ENCODE measurements at regions of chr9 and their contacts with region 1.

Region 1: DNA sequence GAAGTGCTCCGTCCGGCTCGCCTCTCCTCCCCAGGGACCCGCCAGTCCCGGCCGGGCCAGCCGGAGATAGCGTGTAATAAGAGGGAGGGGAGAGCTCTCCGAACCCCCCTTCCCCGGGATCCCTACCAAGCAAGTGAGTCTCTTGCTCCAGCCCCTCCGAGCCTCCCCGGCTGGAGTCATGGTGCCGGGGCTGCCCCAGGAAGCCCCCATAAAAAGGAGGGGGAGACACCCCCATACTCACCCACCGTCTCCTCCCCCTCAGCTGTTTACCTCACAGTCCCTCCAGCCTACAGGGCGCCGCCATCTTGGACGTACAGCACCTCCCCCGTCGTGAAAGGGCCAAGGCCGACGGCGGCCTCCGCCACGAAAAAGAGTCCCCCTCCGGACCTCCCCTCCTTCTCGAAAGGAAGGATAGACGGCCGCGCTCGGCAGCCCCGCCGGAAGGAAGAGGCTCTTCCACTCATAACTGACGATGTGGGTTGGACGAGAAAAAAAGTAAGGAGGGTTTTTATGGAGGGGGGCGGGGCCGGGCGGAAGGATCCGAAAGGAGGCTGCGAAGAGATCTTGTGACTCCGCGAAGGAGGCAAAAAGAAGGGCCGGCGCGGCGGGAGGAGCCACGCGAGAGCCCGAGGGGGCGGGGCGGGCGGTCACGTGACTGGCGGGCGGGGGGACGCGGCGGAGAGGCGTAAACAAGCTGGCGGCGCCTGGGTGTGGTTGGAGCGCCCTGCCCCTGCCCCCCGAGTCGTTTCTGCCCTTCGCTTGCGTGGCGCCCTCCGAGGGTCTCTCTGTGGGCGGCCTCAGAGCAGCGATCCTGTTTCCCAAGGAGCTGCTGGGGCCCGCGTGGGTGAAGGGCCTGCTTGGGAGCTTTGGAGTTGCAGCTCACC is at the start of gene TSC1:
- DNase-seq: peak; percentile 96 to 99 (median 98)
- ATAC-seq: peak; percentile 94
- H3K4me3 ChIP-seq: peak within 1 kb of the TSS; percentile 93
- H3K4me3 Mint-ChIP-seq: peak within 1 kb of the TSS; percentile 90 to 99 (median 98)
- H3K27ac ChIP-seq: peak within 1 kb of the TSS; percentile 94
- H3K27ac Mint-ChIP-seq: peak within 1 kb of the TSS; percentile 99 to 100 (median 100)
- H3K4me1 ChIP-seq: peaks cover 8 to 14% of the 10 kb centered on the region in 2 donors
- H3K4me1 Mint-ChIP-seq: peaks cover 15 to 45% (median 27%) of the 10 kb centered on the region in 7 donors
- H3K27me3 ChIP-seq: no peaks in the 10 kb centered on the region
- H3K27me3 Mint-ChIP-seq: peaks cover 0 to 3% (median 0%) of the 10 kb centered on the region in 5 donors
- total RNA-seq, gene TSC1: 38.1 to 98.3 (median 59.6) TPM

Region 2: GRCh38 chr9:132768932-132769905 is 175.3 kb before region 1 on chr9:
- CTCF ChIA-PET with region 1: no interaction called
- POLR2A ChIA-PET with region 1: interaction called, 4 read pairs
- intact Hi-C with region 1: loop called in 1 of 2 experiments (anchors 1 kb)
- DNase-seq: peak in 8 of 9 donors; percentile 42 to 69 (median 60)
- ATAC-seq: peak; percentile 86
- H3K4me3 ChIP-seq: peak overlapping the region; percentile 86
- H3K4me3 Mint-ChIP-seq: peak overlapping the region; percentile 95 to 100 (median 98)
- H3K27ac ChIP-seq: peak overlapping the region; percentile 77
- H3K27ac Mint-ChIP-seq: peak overlapping the region; percentile 90 to 99 (median 97)
- H3K4me1 ChIP-seq: peaks cover 3 to 9% of the 10 kb centered on the region in 2 donors
- H3K4me1 Mint-ChIP-seq: peaks cover 8 to 37% (median 27%) of the 10 kb centered on the region in 7 donors
- H3K27me3 ChIP-seq: no peaks in the 10 kb centered on the region
- H3K27me3 Mint-ChIP-seq: peaks cover 0 to 20% (median 0%) of the 10 kb centered on the region in 5 donors

Region 3: DNA sequence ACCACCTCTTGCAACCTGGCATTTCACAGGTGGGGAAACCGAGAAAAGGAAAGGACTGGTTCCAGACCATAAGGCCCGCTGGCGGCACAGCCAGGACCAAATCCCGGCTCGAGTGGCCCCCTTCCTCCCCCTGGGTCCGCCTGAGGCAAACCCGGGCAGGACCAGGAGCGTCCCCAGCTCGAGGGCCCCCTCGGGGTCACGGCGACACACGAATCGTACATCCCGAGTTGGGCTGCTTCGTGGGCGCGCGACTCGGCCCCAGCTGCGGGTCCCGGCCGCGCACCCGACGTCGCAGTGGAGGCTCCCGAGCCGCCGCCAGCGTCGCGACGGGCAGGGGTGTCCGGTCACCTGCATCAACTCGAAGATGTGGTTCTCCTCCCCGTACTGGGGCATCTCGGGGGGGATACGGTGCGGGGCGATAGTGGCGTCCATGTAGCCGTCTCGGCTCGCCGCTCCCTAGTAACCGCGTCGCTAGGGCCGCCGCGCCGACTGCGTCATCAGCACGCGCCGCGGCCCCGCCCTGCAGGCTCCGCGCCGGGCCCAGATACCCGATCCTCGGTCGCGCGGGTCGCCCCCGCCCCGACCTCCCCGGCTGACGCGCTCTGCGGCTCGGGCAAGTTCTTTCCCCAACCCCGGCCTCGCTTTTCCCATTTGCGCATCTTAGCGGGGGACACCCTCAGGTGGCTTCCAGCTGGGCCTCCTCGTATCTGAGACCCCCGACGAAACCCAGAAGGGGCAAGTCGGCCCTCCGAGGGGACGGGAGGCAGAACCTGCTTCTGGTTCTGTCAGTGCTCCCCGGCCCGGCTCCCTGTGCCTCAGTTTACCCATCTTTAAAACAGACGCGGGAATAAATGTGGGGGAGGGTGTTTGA is 66.5 kb before region 1 on chr9 and contains the start of gene AK8:
- CTCF ChIA-PET with region 1: no interaction called
- POLR2A ChIA-PET with region 1: no interaction called
- intact Hi-C with region 1: loop called (anchors 1 kb)
- DNase-seq: peak; percentile 69 to 88 (median 80)
- ATAC-seq: peak; percentile 91
- H3K4me3 ChIP-seq: peak within 1 kb of the TSS; percentile 98
- H3K4me3 Mint-ChIP-seq: peak within 1 kb of the TSS; percentile 73 to 93 (median 81)
- H3K27ac ChIP-seq: peak within 1 kb of the TSS; percentile 74
- H3K27ac Mint-ChIP-seq: peak within 1 kb of the TSS; percentile 71 to 89 (median 85)
- H3K4me1 ChIP-seq: peaks cover 0 to 6% of the 10 kb centered on the region in 2 donors
- H3K4me1 Mint-ChIP-seq: peaks cover 5 to 30% (median 7%) of the 10 kb centered on the region in 7 donors
- H3K27me3 ChIP-seq: no peaks in the 10 kb centered on the region
- H3K27me3 Mint-ChIP-seq: peaks cover 0 to 12% (median 0%) of the 10 kb centered on the region in 5 donors
- total RNA-seq, gene AK8: 0.10 to 0.20 TPM in 2 of 5 experiments, not detected in the others

Region 4: GRCh38 chr9:132973713-132974112 is 29.2 kb after region 1 on chr9:
- CTCF ChIA-PET with region 1: interaction called, 3 read pairs
- POLR2A ChIA-PET with region 1: interaction called, 3 read pairs
- intact Hi-C with region 1: loop called in 1 of 2 experiments (anchors 1 kb)
- DNase-seq: no peak
- ATAC-seq: no peak
- H3K4me3 ChIP-seq: no peak overlapping the region
- H3K4me3 Mint-ChIP-seq: no peak overlapping the region
- H3K27ac ChIP-seq: no peak overlapping the region
- H3K27ac Mint-ChIP-seq: no peak overlapping the region
- H3K4me1 ChIP-seq: no peaks in the 10 kb centered on the region
- H3K4me1 Mint-ChIP-seq: peaks cover 5 to 12% (median 8%) of the 10 kb centered on the region in 7 donors
- H3K27me3 ChIP-seq: peaks cover 0 to 7% of the 10 kb centered on the region in 2 donors
- H3K27me3 Mint-ChIP-seq: peaks cover 12 to 34% (median 25%) of the 10 kb centered on the region in 5 donors

Region 5: GRCh38 chr9:133023117-133023890 is 78.8 kb after region 1 on chr9:
- CTCF ChIA-PET with region 1: no interaction called
- POLR2A ChIA-PET with region 1: no interaction called
- intact Hi-C with region 1: loop called in 1 of 2 experiments (anchors 1 kb)
- DNase-seq: peak in 5 of 9 donors; percentile 11 to 55 (median 14)
- ATAC-seq: no peak
- H3K4me3 ChIP-seq: no peak overlapping the region
- H3K4me3 Mint-ChIP-seq: peak overlapping the region in 1 of 10 donors; percentile 66
- H3K27ac ChIP-seq: no peak overlapping the region
- H3K27ac Mint-ChIP-seq: peak overlapping the region in 1 of 9 donors; percentile 49
- H3K4me1 ChIP-seq: peaks cover 0 to 8% of the 10 kb centered on the region in 2 donors
- H3K4me1 Mint-ChIP-seq: peaks cover 0 to 27% (median 19%) of the 10 kb centered on the region in 7 donors
- H3K27me3 ChIP-seq: no peaks in the 10 kb centered on the region
- H3K27me3 Mint-ChIP-seq: no peaks in the 10 kb centered on the region

Region 6: GRCh38 chr9:133060417-133060841 is 115.9 kb after region 1 on chr9:
- CTCF ChIA-PET with region 1: no interaction called
- POLR2A ChIA-PET with region 1: no interaction called
- intact Hi-C with region 1: no loop called
- DNase-seq: peak in 3 of 9 donors; percentile 18 to 24 (median 20)
- ATAC-seq: no peak
- H3K4me3 ChIP-seq: no peak overlapping the region
- H3K4me3 Mint-ChIP-seq: peak overlapping the region; percentile 34 to 76 (median 68)
- H3K27ac ChIP-seq: no peak overlapping the region
- H3K27ac Mint-ChIP-seq: peak overlapping the region; percentile 2 to 90 (median 75)
- H3K4me1 ChIP-seq: peaks cover 5 to 49% of the 10 kb centered on the region in 2 donors
- H3K4me1 Mint-ChIP-seq: peaks cover 25 to 67% (median 48%) of the 10 kb centered on the region in 7 donors
- H3K27me3 ChIP-seq: no peaks in the 10 kb centered on the region
- H3K27me3 Mint-ChIP-seq: no peaks in the 10 kb centered on the region

Measured in naive thymus-derived CD4-positive, alpha-beta T cell (primary cell).